Activated CD4-positive, alpha-beta memory T cell treated with anti-CD3 and anti-CD28 coated beads for 36 hours (primary cell): ENCODE measurements at regions of chr2 and their contacts with region 1.

Region 1: GRCh38 chr2:43542285-43542937 is 53.4 kb downstream of the THADA start:
- DNase-seq: no peak
- H3K4me3 Mint-ChIP-seq: no peak overlapping the region
- H3K27ac Mint-ChIP-seq: no peak overlapping the region
- H3K4me1 Mint-ChIP-seq: peaks cover 21% of the 10 kb centered on the region
- H3K27me3 Mint-ChIP-seq: no peaks in the 10 kb centered on the region

Region 2: DNA sequence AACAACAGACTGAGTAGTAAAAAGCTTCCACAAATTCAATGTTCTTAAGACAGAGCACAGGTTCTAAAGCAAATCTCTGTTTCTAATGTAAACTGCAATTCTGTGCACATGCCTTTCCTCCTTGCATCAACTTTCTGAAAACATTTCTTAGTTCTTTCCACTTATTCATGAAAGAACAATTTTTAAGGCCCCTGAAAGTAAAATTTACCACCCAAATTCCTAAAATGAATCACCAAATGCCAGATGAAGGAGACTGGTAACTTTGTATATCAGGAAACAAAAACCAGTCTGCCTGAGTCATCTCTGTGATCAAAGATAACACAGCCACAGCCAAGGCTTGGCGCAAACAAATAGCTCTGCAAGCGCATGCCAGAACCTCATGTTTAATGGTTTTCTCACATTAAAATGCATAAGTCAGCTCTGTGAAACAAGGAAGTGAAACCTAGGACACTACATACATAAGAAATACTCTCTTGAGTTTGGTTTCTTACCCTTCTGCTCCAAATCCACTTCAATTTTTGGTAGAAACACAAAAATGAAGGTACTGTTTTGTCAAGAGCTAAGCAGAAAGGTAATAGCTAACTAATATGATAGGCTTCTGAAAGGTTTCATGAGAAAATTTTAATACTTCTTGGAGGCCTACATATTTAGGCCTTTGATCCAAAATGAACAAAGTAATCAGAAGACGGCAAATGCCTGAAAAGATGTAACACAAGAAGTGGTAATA is 115.9 kb before region 1 on chr2:
- CTCF ChIA-PET with region 1: interaction called, 5 read pairs
- POLR2A ChIA-PET with region 1: no interaction called
- intact Hi-C with region 1: loop called (anchors 5 kb)
- DNase-seq: peak; percentile 83
- H3K4me3 Mint-ChIP-seq: no peak overlapping the region
- H3K27ac Mint-ChIP-seq: peak overlapping the region; percentile 19
- H3K4me1 Mint-ChIP-seq: peaks cover 37% of the 10 kb centered on the region
- H3K27me3 Mint-ChIP-seq: no peaks in the 10 kb centered on the region

Region 3: GRCh38 chr2:43507137-43507536 is 35.3 kb before region 1 on chr2:
- CTCF ChIA-PET with region 1: no interaction called
- POLR2A ChIA-PET with region 1: no interaction called
- intact Hi-C with region 1: loop called (anchors 5 kb)
- DNase-seq: no peak
- H3K4me3 Mint-ChIP-seq: no peak overlapping the region
- H3K27ac Mint-ChIP-seq: no peak overlapping the region
- H3K4me1 Mint-ChIP-seq: peaks cover 28% of the 10 kb centered on the region
- H3K27me3 Mint-ChIP-seq: no peaks in the 10 kb centered on the region

Region 4: GRCh38 chr2:43569921-43570320 is 27.5 kb after region 1 on chr2:
- CTCF ChIA-PET with region 1: interaction called, 16 read pairs
- POLR2A ChIA-PET with region 1: no interaction called
- intact Hi-C with region 1: no loop called
- DNase-seq: peak; percentile 58
- H3K4me3 Mint-ChIP-seq: peak overlapping the region; percentile 58
- H3K27ac Mint-ChIP-seq: peak overlapping the region; percentile 92
- H3K4me1 Mint-ChIP-seq: peaks cover 73% of the 10 kb centered on the region
- H3K27me3 Mint-ChIP-seq: no peaks in the 10 kb centered on the region

Region 5: GRCh38 chr2:44038277-44038676 is 495.9 kb after region 1 on chr2:
- CTCF ChIA-PET with region 1: no interaction called
- POLR2A ChIA-PET with region 1: no interaction called
- intact Hi-C with region 1: no loop called
- DNase-seq: no peak
- H3K4me3 Mint-ChIP-seq: no peak overlapping the region
- H3K27ac Mint-ChIP-seq: no peak overlapping the region
- H3K4me1 Mint-ChIP-seq: no peaks in the 10 kb centered on the region
- H3K27me3 Mint-ChIP-seq: no peaks in the 10 kb centered on the region